ENCODE measurements at regions of chr2 and their contacts with region 1.

Region 1: DNA sequence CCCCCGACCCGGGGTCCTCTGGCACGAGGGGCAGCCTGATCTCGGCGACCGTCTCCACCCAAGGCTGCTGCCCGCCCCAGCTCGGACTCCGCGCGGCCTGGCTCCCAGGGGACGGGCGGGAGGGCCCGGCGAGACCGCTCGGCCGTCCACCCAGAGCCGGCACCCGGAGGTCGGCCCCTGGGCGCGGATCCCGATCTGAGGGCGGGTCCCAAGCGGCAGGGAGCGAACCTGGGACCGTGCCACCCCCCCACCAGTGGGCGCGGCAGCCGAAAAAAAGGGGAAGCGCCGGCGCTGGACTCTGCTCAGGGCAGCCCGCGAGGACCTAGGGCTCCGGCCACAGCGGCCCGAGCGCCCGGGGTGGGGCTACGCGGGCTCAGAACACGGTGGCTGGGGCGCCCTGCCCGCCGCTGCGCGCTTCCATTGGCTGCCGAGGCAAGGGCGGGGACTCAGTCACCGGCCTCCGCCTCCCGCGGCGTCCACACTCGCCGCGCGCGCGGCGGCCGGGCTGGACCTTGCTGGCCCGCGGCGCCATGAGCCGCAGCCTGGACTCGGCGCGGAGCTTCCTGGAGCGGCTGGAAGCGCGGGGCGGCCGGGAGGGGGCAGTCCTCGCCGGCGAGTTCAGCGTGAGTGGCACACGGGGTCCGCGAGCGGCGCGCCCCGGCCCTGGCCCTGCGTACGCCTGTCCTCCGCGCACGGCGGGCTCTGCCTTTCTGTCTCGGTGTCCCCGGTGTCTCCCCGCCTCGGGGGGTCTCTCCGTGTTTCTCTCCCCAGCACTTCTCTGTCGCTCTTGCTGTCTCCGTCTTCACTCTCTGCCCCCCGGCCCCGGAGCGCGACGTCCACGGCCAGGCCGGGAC is at the start of gene PTPN18:
- H3K4me3 Mint-ChIP-seq: peak within 1 kb of the TSS; percentile 93
- H3K27ac Mint-ChIP-seq: peak within 1 kb of the TSS; percentile 94
- H3K4me1 Mint-ChIP-seq: peaks cover 68% of the 10 kb centered on the region
- H3K27me3 Mint-ChIP-seq: no peaks in the 10 kb centered on the region

Region 2: DNA sequence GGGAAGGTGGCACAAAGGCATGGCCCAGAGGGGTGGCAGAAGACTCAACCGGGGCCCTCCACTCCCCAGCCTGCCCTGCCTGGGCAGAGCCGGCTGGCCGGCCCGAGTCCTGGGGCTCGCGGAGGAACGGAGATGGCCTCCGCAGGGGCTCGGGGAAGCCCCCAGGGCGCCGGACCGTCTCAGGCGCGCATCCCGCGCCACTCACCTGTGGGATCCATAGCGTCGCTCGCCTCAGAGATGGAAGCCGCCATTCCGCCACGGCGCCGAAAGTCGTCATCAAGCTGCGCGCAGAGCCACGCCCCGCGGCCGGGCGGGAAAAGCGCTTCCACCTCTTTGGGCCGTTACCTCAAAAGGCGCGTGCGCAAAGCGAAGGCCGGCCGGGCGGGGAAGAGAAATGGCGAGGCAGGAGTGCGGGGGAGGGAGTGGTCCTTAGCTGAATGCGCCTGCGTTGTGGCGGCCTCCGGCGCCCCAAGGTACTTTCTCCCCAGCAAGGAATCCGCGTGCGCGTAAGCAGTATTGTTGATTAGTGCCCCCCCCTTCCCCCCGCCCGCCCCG is 174.4 kb before region 1 on chr2 and contains the start of gene SMPD4:
- intact Hi-C with region 1: loop called (anchors 5 kb)
- H3K4me3 Mint-ChIP-seq: peak within 1 kb of the TSS; percentile 90
- H3K27ac Mint-ChIP-seq: peak within 1 kb of the TSS; percentile 90
- H3K4me1 Mint-ChIP-seq: peaks cover 38% of the 10 kb centered on the region
- H3K27me3 Mint-ChIP-seq: no peaks in the 10 kb centered on the region

Region 3: DNA sequence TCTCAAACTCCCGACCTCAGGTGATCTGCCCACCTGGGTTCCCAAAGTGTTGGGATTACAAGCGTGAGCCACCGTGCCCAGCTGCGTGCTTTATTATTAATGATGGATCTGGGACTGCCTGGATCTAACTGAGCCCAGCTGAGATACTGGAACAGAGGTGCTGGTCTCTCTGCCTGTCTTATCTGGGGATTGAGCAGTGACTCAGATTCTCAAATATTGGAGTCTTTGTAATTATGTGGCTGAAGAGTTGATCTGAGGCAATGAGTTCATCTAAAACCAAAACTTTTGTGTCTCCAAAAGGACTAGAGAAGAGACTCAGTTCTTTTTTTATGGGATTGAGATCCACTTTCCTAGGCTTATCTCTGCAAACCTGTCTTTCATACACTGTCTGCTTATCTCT is 765.7 kb after region 1 on chr2:
- intact Hi-C with region 1: no loop called
- H3K4me3 Mint-ChIP-seq: no peak overlapping the region
- H3K27ac Mint-ChIP-seq: no peak overlapping the region
- H3K4me1 Mint-ChIP-seq: peaks cover 25% of the 10 kb centered on the region
- H3K27me3 Mint-ChIP-seq: no peaks in the 10 kb centered on the region

Region 4: GRCh38 chr2:131201098-131201497 is 845.3 kb after region 1 on chr2:
- intact Hi-C with region 1: no loop called
- H3K4me3 Mint-ChIP-seq: no peak overlapping the region
- H3K27ac Mint-ChIP-seq: no peak overlapping the region
- H3K4me1 Mint-ChIP-seq: no peaks in the 10 kb centered on the region
- H3K27me3 Mint-ChIP-seq: peaks cover 2% of the 10 kb centered on the region